Activated CD8-positive, alpha-beta memory T cell treated with anti-CD3 and anti-CD28 coated beads, Interleukin-2, amount 10 ng/mL, durations not matched to agents 7 days and 5 days (primary cell): ENCODE measurements at regions of chr11 and their contacts with region 1.

Region 1: DNA sequence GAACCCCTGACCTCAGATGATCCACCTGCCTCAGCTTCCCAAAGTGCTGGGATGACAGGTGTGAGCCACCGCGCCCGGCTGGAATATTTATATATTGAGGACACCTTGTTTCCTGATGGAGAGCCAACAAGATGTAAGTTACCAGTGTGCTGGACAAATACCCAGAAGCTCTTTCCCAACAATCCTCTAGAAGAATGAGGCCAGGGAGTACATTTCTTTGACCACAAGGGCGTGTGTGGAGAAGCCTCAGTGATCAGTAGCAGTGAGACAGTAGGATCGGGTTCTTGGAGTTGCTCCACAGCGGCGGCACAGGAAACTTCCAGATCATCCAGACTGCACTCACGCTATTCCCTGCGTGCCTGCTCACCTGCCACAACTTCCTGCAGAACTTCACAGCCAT is 10.3 kb upstream of the POLA2 start:
- DNase-seq: no peak
- ATAC-seq: no peak
- H3K4me3 Mint-ChIP-seq: no peak overlapping the region
- H3K27ac Mint-ChIP-seq: no peak overlapping the region
- H3K4me1 Mint-ChIP-seq: peaks cover 2% of the 10 kb centered on the region
- H3K27me3 Mint-ChIP-seq: peaks cover 7% of the 10 kb centered on the region

Region 2: GRCh38 chr11:65225279-65226102 is 26.0 kb before region 1 on chr11:
- CTCF ChIA-PET with region 1: interaction called, 46 read pairs
- DNase-seq: peak; percentile 72
- ATAC-seq: peak; percentile 90
- H3K4me3 Mint-ChIP-seq: peak overlapping the region; percentile 70
- H3K27ac Mint-ChIP-seq: no peak overlapping the region
- H3K4me1 Mint-ChIP-seq: peaks cover 19% of the 10 kb centered on the region
- H3K27me3 Mint-ChIP-seq: peaks cover 17% of the 10 kb centered on the region

Region 3: GRCh38 chr11:65354265-65355012 is 103.0 kb after region 1 on chr11 and contains the start of gene TIGD3:
- CTCF ChIA-PET with region 1: no interaction called
- DNase-seq: peak; percentile 98
- ATAC-seq: peak; percentile 98
- H3K4me3 Mint-ChIP-seq: peak within 1 kb of the TSS; percentile 85
- H3K27ac Mint-ChIP-seq: peak within 1 kb of the TSS; percentile 82
- H3K4me1 Mint-ChIP-seq: peaks cover 25% of the 10 kb centered on the region
- H3K27me3 Mint-ChIP-seq: peaks cover 15% of the 10 kb centered on the region
- total RNA-seq, gene TIGD3: 1.1 TPM